Activated naive CD4-positive, alpha-beta T cell treated with anti-CD3 and anti-CD28 coated beads for 36 hours (primary cell): ENCODE measurements at regions of chr7 and their contacts with region 1.

Region 1: GRCh38 chr7:149624419-149625339 is 127.1 kb upstream of the ZNF746 start:
- DNase-seq: peak; percentile 93
- H3K4me3 Mint-ChIP-seq: peak overlapping the region; percentile 87
- H3K27ac Mint-ChIP-seq: peak overlapping the region; percentile 80
- H3K4me1 Mint-ChIP-seq: peaks cover 33% of the 10 kb centered on the region
- H3K27me3 Mint-ChIP-seq: no peaks in the 10 kb centered on the region

Region 2: DNA sequence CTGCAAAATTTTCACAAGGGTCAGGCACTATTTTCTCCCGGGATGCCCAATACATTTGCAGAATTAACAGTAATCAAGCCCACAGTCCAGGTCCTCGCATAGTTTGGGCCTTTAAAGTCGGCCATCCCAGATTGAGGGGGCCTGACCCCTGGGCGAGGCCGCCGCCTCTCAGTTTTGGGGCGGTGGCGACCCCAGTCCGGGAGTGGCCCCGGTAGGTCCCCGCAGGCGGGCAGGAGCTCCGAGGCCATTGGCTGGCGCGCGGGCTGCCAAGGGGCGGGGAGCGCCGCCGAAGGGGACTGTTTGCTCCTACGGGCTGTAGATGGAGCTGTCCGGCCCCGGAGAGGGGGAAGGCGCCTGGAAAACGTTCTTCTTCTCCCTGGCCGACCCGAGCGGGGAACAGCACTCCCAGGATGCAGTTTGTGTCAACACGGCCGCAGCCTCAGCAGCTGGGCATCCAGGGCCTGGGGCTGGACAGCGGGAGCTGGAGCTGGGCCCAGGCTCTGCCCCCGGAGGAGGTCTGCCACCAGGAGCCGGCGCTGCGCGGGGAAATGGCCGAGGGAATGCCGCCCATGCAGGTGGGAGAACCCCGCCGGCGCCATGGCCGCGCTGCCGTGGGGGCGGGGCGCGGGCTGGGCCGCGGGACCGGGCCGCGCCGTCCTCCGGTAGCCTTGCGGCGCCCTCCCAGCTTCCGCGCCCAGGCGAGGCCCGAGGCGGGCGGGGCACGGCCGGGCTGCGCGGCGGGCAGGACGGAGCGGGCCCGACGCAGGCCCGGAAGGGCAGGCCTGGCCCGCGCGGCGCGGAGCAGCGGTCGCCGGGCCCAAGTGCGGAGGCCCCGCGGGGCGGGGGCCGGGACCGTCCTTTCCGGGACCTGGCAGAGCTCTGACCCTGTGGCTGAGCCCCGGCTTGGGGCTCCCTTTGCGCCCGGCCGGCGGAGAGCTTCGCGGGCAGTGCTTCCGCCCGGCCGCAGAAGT is 429.2 kb before region 1 on chr7 and contains the start of gene ZNF282:
- CTCF ChIA-PET with region 1: no interaction called
- intact Hi-C with region 1: loop called (anchors 2 kb)
- DNase-seq: peak; percentile 85
- H3K4me3 Mint-ChIP-seq: peak within 1 kb of the TSS; percentile 85
- H3K27ac Mint-ChIP-seq: peak within 1 kb of the TSS; percentile 78
- H3K4me1 Mint-ChIP-seq: peaks cover 30% of the 10 kb centered on the region
- H3K27me3 Mint-ChIP-seq: no peaks in the 10 kb centered on the region
- total RNA-seq, gene ZNF282: 21.6 to 22.0 TPM

Region 3: GRCh38 chr7:149310113-149310836 is 314.4 kb before region 1 on chr7:
- CTCF ChIA-PET with region 1: interaction called, 4 read pairs
- intact Hi-C with region 1: loop called (anchors 1 kb)
- DNase-seq: no peak
- H3K4me3 Mint-ChIP-seq: no peak overlapping the region
- H3K27ac Mint-ChIP-seq: no peak overlapping the region
- H3K4me1 Mint-ChIP-seq: peaks cover 2% of the 10 kb centered on the region
- H3K27me3 Mint-ChIP-seq: no peaks in the 10 kb centered on the region

Region 4: GRCh38 chr7:149497456-149498261 is 127.0 kb before region 1 on chr7 and contains the start of gene ZNF746:
- CTCF ChIA-PET with region 1: interaction called, 13 read pairs
- intact Hi-C with region 1: loop called (anchors 1 kb)
- DNase-seq: peak; percentile 84
- H3K4me3 Mint-ChIP-seq: peak within 1 kb of the TSS; percentile 93
- H3K27ac Mint-ChIP-seq: peak within 1 kb of the TSS; percentile 90
- H3K4me1 Mint-ChIP-seq: peaks cover 24% of the 10 kb centered on the region
- H3K27me3 Mint-ChIP-seq: peaks cover 2% of the 10 kb centered on the region
- total RNA-seq, gene ZNF746: 11.8 to 12.0 TPM

Region 5: GRCh38 chr7:149524394-149524793 is 100.3 kb before region 1 on chr7:
- CTCF ChIA-PET with region 1: no interaction called
- intact Hi-C with region 1: no loop called
- DNase-seq: no peak
- H3K4me3 Mint-ChIP-seq: no peak overlapping the region
- H3K27ac Mint-ChIP-seq: no peak overlapping the region
- H3K4me1 Mint-ChIP-seq: no peaks in the 10 kb centered on the region
- H3K27me3 Mint-ChIP-seq: no peaks in the 10 kb centered on the region

Region 6: DNA sequence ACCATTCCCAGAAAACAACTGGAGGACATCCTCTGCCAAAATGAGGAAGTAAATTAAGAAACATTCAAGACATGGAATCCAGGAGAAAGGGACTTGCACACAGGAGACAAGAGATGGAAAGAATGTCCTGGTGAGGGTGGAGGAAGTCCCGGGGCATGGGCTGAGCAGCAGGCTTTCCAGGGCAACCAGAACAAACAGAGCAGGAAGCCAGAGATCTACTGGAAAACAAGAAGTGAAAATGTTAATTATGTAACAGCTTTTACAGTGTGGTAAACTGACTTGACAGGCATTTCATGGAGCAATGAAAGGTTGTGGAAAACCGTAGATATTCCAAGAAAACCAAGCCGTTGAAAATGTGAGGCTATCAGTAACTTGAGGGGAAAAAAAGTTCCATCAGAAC is 71.9 kb before region 1 on chr7:
- CTCF ChIA-PET with region 1: no interaction called
- intact Hi-C with region 1: no loop called
- DNase-seq: no peak
- H3K4me3 Mint-ChIP-seq: no peak overlapping the region
- H3K27ac Mint-ChIP-seq: no peak overlapping the region
- H3K4me1 Mint-ChIP-seq: no peaks in the 10 kb centered on the region
- H3K27me3 Mint-ChIP-seq: no peaks in the 10 kb centered on the region

Region 7: GRCh38 chr7:149771721-149772240 is 147.1 kb after region 1 on chr7:
- CTCF ChIA-PET with region 1: no interaction called
- intact Hi-C with region 1: loop called (anchors 1 kb)
- DNase-seq: peak; percentile 88
- H3K4me3 Mint-ChIP-seq: peak overlapping the region; percentile 71
- H3K27ac Mint-ChIP-seq: no peak overlapping the region
- H3K4me1 Mint-ChIP-seq: peaks cover 6% of the 10 kb centered on the region
- H3K27me3 Mint-ChIP-seq: no peaks in the 10 kb centered on the region

Region 8: GRCh38 chr7:149832332-149833041 is 207.8 kb after region 1 on chr7:
- CTCF ChIA-PET with region 1: no interaction called
- intact Hi-C with region 1: no loop called
- DNase-seq: no peak
- H3K4me3 Mint-ChIP-seq: no peak overlapping the region
- H3K27ac Mint-ChIP-seq: no peak overlapping the region
- H3K4me1 Mint-ChIP-seq: peaks cover under 1% of the 10 kb centered on the region
- H3K27me3 Mint-ChIP-seq: no peaks in the 10 kb centered on the region